ENCODE measurements at regions of chr10 and their contacts with region 1.

Region 1: GRCh38 chr10:34780818-34781380 is 34.2 kb downstream of the PARD3 start:
- DNase-seq: peak; percentile 97
- H3K4me3 ChIP-seq: peak overlapping the region; percentile 19
- H3K27ac ChIP-seq: peak overlapping the region; percentile 8
- H3K4me1 ChIP-seq: peaks cover 57% of the 10 kb centered on the region
- H3K27me3 ChIP-seq: peaks cover 27% of the 10 kb centered on the region
- CTCF ChIP-seq: no peak

Region 2: GRCh38 chr10:34405611-34406462 is 375.1 kb before region 1 on chr10:
- CTCF ChIA-PET with region 1: no interaction called
- POLR2A ChIA-PET with region 1: no interaction called
- intact Hi-C with region 1: no loop called
- DNase-seq: peak; percentile 41
- H3K4me3 ChIP-seq: no peak overlapping the region
- H3K27ac ChIP-seq: no peak overlapping the region
- H3K4me1 ChIP-seq: peaks cover 18% of the 10 kb centered on the region
- H3K27me3 ChIP-seq: no peaks in the 10 kb centered on the region
- CTCF ChIP-seq: no peak

Region 3: GRCh38 chr10:34739915-34740314 is 41.0 kb before region 1 on chr10:
- CTCF ChIA-PET with region 1: interaction called, 11 read pairs
- POLR2A ChIA-PET with region 1: no interaction called
- intact Hi-C with region 1: no loop called
- DNase-seq: peak; percentile 90
- H3K4me3 ChIP-seq: no peak overlapping the region
- H3K27ac ChIP-seq: no peak overlapping the region
- H3K4me1 ChIP-seq: peaks cover 18% of the 10 kb centered on the region
- H3K27me3 ChIP-seq: no peaks in the 10 kb centered on the region
- CTCF ChIP-seq: no peak

Region 4: GRCh38 chr10:34766266-34766600 is 14.7 kb before region 1 on chr10:
- CTCF ChIA-PET with region 1: interaction called, 3 read pairs
- POLR2A ChIA-PET with region 1: interaction called, 10 read pairs
- intact Hi-C with region 1: no loop called
- DNase-seq: peak; percentile 86
- H3K4me3 ChIP-seq: no peak overlapping the region
- H3K27ac ChIP-seq: peak overlapping the region; percentile 38
- H3K4me1 ChIP-seq: peaks cover 47% of the 10 kb centered on the region
- H3K27me3 ChIP-seq: peaks cover 7% of the 10 kb centered on the region
- CTCF ChIP-seq: no peak

Measured in A673 (cell line).